Sigmoid colon (tissue), 7 donors: ENCODE measurements at regions of chr19 and their contacts with region 1.

Region 1: GRCh38 chr19:54247106-54247930 is 4.7 kb upstream of the LILRA6 start:
- DNase-seq: no peak
- H3K4me3 ChIP-seq: no peak overlapping the region
- H3K27ac ChIP-seq: peak overlapping the region in 1 of 4 donors; percentile 28
- H3K4me1 ChIP-seq: no peaks in the 10 kb centered on the region
- H3K27me3 ChIP-seq: peaks cover 0 to 15% (median 5%) of the 10 kb centered on the region in 3 donors
- CTCF ChIP-seq: no peak
- EP300 ChIP-seq: no peak
- POLR2A ChIP-seq: no peak

Region 2: GRCh38 chr19:54218960-54219661 is 28.2 kb before region 1 on chr19:
- intact Hi-C with region 1: loop called (anchors 2 kb)
- DNase-seq: peak; percentile 60
- H3K4me3 ChIP-seq: no peak overlapping the region
- H3K27ac ChIP-seq: no peak overlapping the region
- H3K4me1 ChIP-seq: no peaks in the 10 kb centered on the region
- H3K27me3 ChIP-seq: peaks cover 0 to 22% (median 6%) of the 10 kb centered on the region in 3 donors
- CTCF ChIP-seq: no peak
- EP300 ChIP-seq: no peak
- POLR2A ChIP-seq: no peak